Caki2 (cell line): ENCODE measurements at regions of chr15 and their contacts with region 1.

Region 1: DNA sequence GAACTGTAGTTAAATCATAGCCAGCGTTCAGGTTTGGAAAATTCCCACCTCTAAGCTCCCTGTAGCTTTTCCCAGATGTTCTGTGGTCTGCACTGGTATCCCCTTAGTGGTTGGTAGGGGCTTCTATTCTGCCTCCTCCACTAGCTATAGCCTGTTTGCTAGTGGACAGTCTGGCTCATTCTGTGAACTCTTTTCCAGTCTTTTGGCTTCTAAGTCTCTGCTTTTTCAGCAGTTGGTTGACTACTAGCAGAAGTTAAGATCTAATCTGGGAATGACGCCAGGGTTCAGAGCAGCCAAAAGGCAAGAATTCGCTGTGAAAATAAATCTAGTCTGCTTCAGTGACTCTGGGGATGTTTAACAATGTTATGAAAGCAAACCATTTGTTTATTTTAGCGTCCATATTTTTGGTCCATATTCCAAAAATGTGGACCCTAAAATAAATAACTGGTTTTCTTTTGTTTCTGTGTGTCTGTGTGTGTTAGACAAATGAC is 73.7 kb upstream of the WDR72 start:
- DNase-seq: peak; percentile 82

Region 2: GRCh38 chr15:53950572-53950971 is 117.4 kb after region 1 on chr15:
- in situ Hi-C with region 1: no loop called
- DNase-seq: no peak

Region 3: DNA sequence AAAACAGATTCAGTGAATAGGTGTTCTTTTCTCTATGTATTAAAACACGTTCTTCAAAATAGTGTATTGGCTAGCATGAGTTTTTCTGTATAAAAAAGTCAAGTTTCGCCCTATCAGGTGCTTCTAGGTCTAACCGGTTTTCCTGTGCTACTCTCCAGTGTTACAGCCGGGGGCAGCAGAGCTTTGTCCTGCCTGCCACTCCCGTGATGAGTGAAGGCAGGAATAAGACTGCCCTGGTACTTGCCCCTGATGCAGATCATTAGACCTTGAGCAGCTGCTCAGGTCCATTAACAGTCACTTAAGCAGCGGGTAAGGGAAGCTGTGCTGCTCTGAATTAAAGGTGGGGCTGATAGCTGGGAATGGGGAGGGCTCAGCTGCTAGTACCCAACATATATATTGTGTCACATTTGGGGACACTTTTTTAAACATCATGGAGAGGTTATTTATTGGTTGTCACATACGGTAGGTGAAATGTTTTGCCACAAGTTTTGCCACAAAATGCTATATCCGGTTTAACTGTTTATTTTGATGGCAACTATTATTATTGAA is 143.7 kb after region 1 on chr15:
- in situ Hi-C with region 1: loop called (anchors 25 kb)
- DNase-seq: peak; percentile 21